ENCODE measurements at regions of chr2 and their contacts with region 1.

Region 1: DNA sequence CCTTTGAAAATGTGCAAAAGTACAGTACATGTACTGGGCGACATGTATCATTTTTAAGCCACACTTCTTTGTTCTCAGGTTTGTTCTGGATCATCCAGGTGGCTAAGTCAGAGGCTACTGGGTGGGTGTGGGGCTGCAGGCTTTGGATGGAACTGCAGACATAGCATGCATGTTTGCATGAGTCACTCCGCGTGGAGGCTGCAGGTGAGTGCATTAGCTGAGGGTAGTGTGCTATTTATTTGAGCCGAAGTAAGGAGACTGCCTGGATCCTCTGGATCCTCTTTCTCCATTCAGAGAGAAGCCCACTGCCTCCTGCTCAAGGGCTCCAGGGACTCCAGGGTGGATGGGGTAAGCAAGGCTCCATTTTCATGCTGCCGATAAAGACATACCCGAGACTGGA is 9.4 kb upstream of the NEURL3 start:
- DNase-seq: peak; percentile 30
- H3K4me3 ChIP-seq: no peak overlapping the region
- H3K27ac ChIP-seq: no peak overlapping the region
- H3K4me1 ChIP-seq: peaks cover under 1% of the 10 kb centered on the region
- H3K27me3 ChIP-seq: no peaks in the 10 kb centered on the region
- CTCF ChIP-seq: no peak

Region 2: DNA sequence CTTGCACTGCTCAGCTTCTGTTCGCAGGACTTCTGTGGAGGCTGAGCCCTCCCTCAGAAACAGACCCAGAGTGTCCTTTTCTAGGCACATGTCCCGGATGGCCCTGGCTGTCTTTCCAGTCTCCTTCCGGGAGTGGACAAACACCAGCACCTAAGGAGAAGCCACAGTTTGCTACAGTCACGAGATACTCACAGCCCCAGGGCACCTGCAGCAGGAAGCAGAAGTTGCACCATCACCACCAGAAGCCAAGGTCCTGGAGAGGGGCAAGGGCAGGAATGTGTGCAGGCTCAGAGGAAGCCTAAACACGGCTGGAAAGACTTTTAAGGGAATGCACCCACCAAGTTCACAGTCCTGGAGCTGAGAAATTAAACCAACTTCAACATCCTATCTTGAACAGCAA is 222.8 kb before region 1 on chr2:
- CTCF ChIA-PET with region 1: no interaction called
- dilution Hi-C with region 1: loop called (anchors 5 kb)
- in situ Hi-C with region 1: no loop called
- intact Hi-C with region 1: no loop called
- DNase-seq: no peak
- H3K4me3 ChIP-seq: no peak overlapping the region
- H3K27ac ChIP-seq: no peak overlapping the region
- H3K4me1 ChIP-seq: no peaks in the 10 kb centered on the region
- H3K27me3 ChIP-seq: no peaks in the 10 kb centered on the region
- CTCF ChIP-seq: no peak

Region 3: DNA sequence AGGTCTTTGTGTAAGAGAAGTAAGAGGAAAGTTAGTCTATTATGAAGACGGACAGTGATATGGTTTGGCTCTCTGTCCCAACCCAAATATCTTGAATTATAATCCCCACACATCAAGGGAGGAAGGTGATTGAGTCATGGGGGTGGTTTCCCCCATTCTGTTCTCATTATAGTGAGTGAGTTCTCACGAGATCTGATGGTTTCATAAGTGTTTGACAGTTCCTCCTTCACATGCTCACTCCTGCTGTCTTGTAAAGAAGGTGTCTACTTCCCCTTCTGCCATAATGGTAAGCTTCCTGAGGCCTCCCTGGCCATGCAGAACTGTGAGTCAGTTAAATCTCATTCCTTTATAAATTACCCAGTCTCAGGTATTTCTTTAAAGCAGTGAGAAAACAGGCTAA is 77.0 kb before region 1 on chr2:
- CTCF ChIA-PET with region 1: no interaction called
- dilution Hi-C with region 1: no loop called
- in situ Hi-C with region 1: no loop called
- intact Hi-C with region 1: no loop called
- DNase-seq: no peak
- H3K4me3 ChIP-seq: no peak overlapping the region
- H3K27ac ChIP-seq: no peak overlapping the region
- H3K4me1 ChIP-seq: no peaks in the 10 kb centered on the region
- H3K27me3 ChIP-seq: no peaks in the 10 kb centered on the region
- CTCF ChIP-seq: no peak

Region 4: DNA sequence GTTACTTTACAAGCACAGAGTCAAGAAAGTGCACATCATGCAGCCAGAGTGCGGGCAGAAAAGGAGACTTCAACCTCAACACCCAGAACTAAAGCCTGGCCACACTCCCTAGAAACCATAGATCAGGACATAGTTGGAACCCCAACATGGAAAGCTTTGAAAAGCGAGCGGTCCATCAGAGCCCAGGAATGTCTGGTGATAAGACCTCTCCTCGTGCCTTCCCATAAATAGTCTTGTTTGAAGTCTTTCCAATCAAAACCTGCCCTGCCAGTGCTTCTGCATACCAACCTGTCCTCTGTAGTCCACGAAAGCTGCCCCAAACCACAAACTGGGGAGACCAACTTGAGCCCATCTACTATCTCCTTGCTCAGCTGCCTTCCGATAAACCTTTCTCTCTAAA is 64.9 kb before region 1 on chr2:
- CTCF ChIA-PET with region 1: no interaction called
- dilution Hi-C with region 1: loop called (anchors 5 kb)
- in situ Hi-C with region 1: no loop called
- intact Hi-C with region 1: no loop called
- DNase-seq: no peak
- H3K4me3 ChIP-seq: no peak overlapping the region
- H3K27ac ChIP-seq: no peak overlapping the region
- H3K4me1 ChIP-seq: no peaks in the 10 kb centered on the region
- H3K27me3 ChIP-seq: no peaks in the 10 kb centered on the region
- CTCF ChIP-seq: no peak

Region 5: GRCh38 chr2:96501471-96501874 is 13.0 kb before region 1 on chr2:
- CTCF ChIA-PET with region 1: no interaction called
- dilution Hi-C with region 1: no loop called
- in situ Hi-C with region 1: no loop called
- intact Hi-C with region 1: no loop called
- DNase-seq: no peak
- H3K4me3 ChIP-seq: no peak overlapping the region
- H3K27ac ChIP-seq: no peak overlapping the region
- H3K4me1 ChIP-seq: peaks cover 9% of the 10 kb centered on the region
- H3K27me3 ChIP-seq: peaks cover 8% of the 10 kb centered on the region
- CTCF ChIP-seq: no peak

Region 6: GRCh38 chr2:96547751-96548161 is 33.2 kb after region 1 on chr2:
- CTCF ChIA-PET with region 1: no interaction called
- dilution Hi-C with region 1: no loop called
- in situ Hi-C with region 1: no loop called
- intact Hi-C with region 1: no loop called
- DNase-seq: no peak
- H3K4me3 ChIP-seq: no peak overlapping the region
- H3K27ac ChIP-seq: no peak overlapping the region
- H3K4me1 ChIP-seq: no peaks in the 10 kb centered on the region
- H3K27me3 ChIP-seq: no peaks in the 10 kb centered on the region
- CTCF ChIP-seq: no peak

Region 7: GRCh38 chr2:96608469-96609455 is 94.2 kb after region 1 on chr2:
- CTCF ChIA-PET with region 1: no interaction called
- dilution Hi-C with region 1: no loop called
- in situ Hi-C with region 1: no loop called
- intact Hi-C with region 1: no loop called
- DNase-seq: peak; percentile 14
- H3K4me3 ChIP-seq: no peak overlapping the region
- H3K27ac ChIP-seq: no peak overlapping the region
- H3K4me1 ChIP-seq: no peaks in the 10 kb centered on the region
- H3K27me3 ChIP-seq: no peaks in the 10 kb centered on the region
- CTCF ChIP-seq: no peak

Measured in mammary epithelial cell (primary cell).